Breast epithelium (tissue), 4 donors: ENCODE measurements at regions of chr6 and their contacts with region 1.

Region 1: GRCh38 chr6:45843848-45844521 is 171.7 kb downstream of the CLIC5 start:
- DNase-seq: no peak
- H3K4me3 ChIP-seq: no peak overlapping the region
- H3K27ac ChIP-seq: no peak overlapping the region
- H3K4me1 ChIP-seq: no peaks in the 10 kb centered on the region
- H3K27me3 ChIP-seq: no peaks in the 10 kb centered on the region
- CTCF ChIP-seq: no peak
- POLR2A ChIP-seq: no peak

Region 2: DNA sequence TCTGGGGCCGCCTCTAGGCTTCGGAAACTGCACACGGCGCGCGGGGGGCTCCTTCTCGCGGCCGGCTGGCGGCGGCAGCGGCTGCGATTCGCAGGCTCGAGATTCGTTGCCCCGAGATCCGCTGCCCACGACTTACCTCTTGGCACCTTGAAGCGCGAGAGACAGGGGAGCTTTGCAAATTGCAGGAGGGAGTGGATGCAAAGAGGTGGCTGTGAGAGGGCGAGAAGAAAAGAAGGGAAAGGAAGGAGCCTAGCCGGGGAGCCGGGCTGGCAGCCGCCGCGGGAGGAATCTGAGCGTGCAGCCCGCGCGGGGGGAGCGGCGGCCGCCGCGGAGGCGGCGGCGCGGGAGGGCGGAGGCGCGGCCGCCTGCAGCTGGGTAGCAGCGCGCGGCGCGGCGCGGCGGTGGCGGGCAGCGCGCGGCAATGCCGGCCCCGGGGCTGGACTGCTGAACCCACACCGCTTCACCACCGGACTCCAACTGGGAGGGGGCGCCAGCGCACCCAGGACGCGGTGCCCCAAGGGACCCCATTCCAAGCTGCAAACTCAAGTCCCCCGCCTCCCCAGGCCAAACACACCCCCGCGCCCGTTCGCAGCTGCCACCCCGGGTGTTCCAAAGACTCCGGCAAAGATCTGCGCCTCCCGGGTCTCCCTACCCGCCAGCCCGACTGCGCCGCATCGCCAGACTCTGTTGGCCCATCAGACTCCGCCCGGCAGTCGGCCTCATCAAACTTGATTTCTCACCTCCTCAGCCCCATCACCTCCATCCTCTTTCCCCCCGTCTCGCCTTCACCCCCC is 422.1 kb before region 1 on chr6:
- intact Hi-C with region 1: loop called (anchors 10 kb)
- DNase-seq: no peak
- H3K4me3 ChIP-seq: peak overlapping the region; percentile 53 to 93 (median 76)
- H3K27ac ChIP-seq: peak overlapping the region; percentile 84 to 96
- H3K4me1 ChIP-seq: peaks cover 0 to 13% of the 10 kb centered on the region in 2 donors
- H3K27me3 ChIP-seq: peaks cover 0 to 22% of the 10 kb centered on the region in 2 donors
- CTCF ChIP-seq: no peak
- POLR2A ChIP-seq: no peak